Head of caudate nucleus (tissue), 42 donors: ENCODE measurements at regions of chr17 and their contacts with region 1.

Region 1: GRCh38 chr17:15456972-15457722 is 10.3 kb downstream of the CDRT4 start:
- DNase-seq: peak; percentile 31 to 88 (median 76)

Region 2: GRCh38 chr17:14926526-14927122 is 530.5 kb before region 1 on chr17:
- intact Hi-C with region 1: no loop called
- DNase-seq: peak in 39 of 42 donors; percentile 6 to 84 (median 61)

Region 3: GRCh38 chr17:15341385-15341849 is 115.7 kb before region 1 on chr17 and contains the start of gene TEKT3:
- intact Hi-C with region 1: loop called (anchors 10 kb)
- DNase-seq: peak; percentile 50 to 93 (median 84)

Region 4: DNA sequence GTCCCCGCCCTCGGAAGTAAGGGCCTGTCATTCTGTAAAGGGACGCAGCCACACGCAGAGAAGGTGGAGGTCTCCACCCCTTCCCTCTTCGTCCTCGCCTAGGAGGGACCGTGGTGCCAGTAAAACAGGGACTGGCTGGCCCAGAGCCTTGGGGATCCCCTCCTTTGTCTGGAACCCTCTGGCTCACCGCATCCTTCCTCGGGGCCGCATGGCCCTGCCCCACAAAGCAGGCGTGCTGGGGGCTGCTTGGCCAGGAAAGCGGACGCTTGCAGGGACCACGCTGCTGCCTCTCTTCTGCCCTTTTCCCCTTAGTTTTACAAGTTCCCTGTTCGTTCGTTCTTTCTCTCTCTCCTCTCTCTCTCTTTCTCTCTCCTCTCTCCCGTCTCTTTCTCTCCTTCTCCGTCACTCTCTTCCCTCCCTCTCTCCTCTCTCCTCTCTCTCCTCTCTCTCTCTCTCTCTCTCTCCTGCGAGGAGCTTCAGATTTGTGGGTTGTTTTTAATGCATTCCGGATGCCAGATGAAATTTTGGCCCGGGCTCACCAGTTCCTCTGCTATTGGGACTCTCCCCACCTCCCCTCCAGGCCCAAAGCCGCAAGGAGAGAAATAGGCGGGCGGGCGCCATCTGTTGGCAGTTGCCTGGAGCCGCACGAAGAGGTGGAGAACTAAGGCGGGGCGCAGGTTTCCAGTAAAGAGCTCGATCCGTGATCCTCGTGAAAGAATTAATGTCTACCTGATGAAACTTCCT is 45.4 kb after region 1 on chr17:
- intact Hi-C with region 1: loop called (anchors 5 kb)
- DNase-seq: peak; percentile 78 to 95 (median 89)